B cell (primary cell): ENCODE measurements at regions of chr17 and their contacts with region 1.

Region 1: GRCh38 chr17:7887482-7888183 is 956 bp upstream of the CHD3 start:
- DNase-seq: peak; percentile 86
- ATAC-seq: peak; percentile 75
- H3K4me3 ChIP-seq: peak overlapping the region; percentile 65 to 95 (median 79)
- H3K4me3 Mint-ChIP-seq: no peak overlapping the region
- H3K27ac ChIP-seq: peak overlapping the region; percentile 46 to 68
- H3K27ac Mint-ChIP-seq: no peak overlapping the region
- H3K4me1 ChIP-seq: peaks cover 19 to 36% of the 10 kb centered on the region in 2 donors
- H3K4me1 Mint-ChIP-seq: peaks cover 3% of the 10 kb centered on the region
- H3K27me3 ChIP-seq: no peaks in the 10 kb centered on the region
- H3K27me3 Mint-ChIP-seq: no peaks in the 10 kb centered on the region
- CTCF ChIP-seq: no peak

Region 2: DNA sequence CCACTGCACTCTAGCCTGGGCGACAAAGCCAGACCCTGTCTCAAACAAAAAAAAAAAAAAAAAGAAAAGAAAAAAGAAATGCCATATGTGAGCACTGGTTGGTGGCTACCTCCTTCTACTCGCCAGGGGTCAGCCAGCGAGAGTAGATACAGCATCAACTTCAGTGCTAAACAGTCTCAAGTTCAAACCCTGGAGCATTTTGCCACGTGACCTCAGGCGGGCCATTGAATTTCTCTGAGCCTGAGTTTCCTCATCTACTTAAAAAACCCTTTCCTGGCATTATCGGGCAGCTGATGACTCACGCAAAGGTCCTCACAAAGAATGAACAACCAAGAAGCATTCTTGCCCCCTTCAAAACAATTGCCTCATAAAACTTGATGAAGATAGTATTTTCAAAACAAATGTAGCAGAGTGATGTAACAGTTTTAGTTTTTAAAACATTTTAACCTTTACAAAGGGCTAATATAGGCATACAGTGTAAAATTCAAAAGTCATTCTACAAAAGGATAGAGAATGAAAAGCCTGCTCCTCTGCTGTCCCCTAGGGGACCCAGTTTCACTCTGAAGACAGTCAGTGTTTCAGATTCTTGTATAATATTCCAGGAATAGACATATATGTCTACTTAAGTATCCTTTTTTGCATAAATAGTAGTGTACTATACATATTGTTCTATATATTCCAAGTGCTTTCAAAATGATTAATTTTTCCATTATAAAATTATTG is 141.7 kb before region 1 on chr17:
- CTCF ChIA-PET with region 1: no interaction called
- POLR2A ChIA-PET with region 1: no interaction called
- intact Hi-C with region 1: loop called (anchors 10 kb)
- DNase-seq: no peak
- ATAC-seq: no peak
- H3K4me3 ChIP-seq: no peak overlapping the region
- H3K4me3 Mint-ChIP-seq: no peak overlapping the region
- H3K27ac ChIP-seq: no peak overlapping the region
- H3K27ac Mint-ChIP-seq: no peak overlapping the region
- H3K4me1 ChIP-seq: no peaks in the 10 kb centered on the region
- H3K4me1 Mint-ChIP-seq: no peaks in the 10 kb centered on the region
- H3K27me3 ChIP-seq: no peaks in the 10 kb centered on the region
- H3K27me3 Mint-ChIP-seq: peaks cover 25% of the 10 kb centered on the region
- CTCF ChIP-seq: no peak

Region 3: GRCh38 chr17:7931709-7932482 is 44.3 kb after region 1 on chr17 and contains the starts of genes CNTROB and TRAPPC1:
- CTCF ChIA-PET with region 1: interaction called, 3 read pairs
- POLR2A ChIA-PET with region 1: interaction called, 3 read pairs
- intact Hi-C with region 1: loop called (anchors 1 kb)
- DNase-seq: peak; percentile 100
- ATAC-seq: peak; percentile 98
- H3K4me3 ChIP-seq: peak within 1 kb of the TSS; percentile 75 to 98 (median 89)
- H3K4me3 Mint-ChIP-seq: peak within 1 kb of the TSS; percentile 95
- H3K27ac ChIP-seq: peak within 1 kb of the TSS; percentile 77 to 88
- H3K27ac Mint-ChIP-seq: peak within 1 kb of the TSS; percentile 95
- H3K4me1 ChIP-seq: peaks cover 18 to 33% of the 10 kb centered on the region in 2 donors
- H3K4me1 Mint-ChIP-seq: peaks cover 44% of the 10 kb centered on the region
- H3K27me3 ChIP-seq: no peaks in the 10 kb centered on the region
- H3K27me3 Mint-ChIP-seq: no peaks in the 10 kb centered on the region
- CTCF ChIP-seq: no peak
- total RNA-seq, gene CNTROB: 34.8 and 40.4 TPM in 2 replicates
- total RNA-seq, gene TRAPPC1: 86.0 and 118 TPM in 2 replicates